Caco-2 (cell line): ENCODE measurements at regions of chr12 and their contacts with region 1.

Region 1: GRCh38 chr12:38921025-38921677 is 15.8 kb upstream of the CPNE8 start:
- DNase-seq: peak; percentile 70
- H3K4me3 ChIP-seq: no peak overlapping the region
- H3K4me3 Mint-ChIP-seq: no peak overlapping the region
- H3K27ac Mint-ChIP-seq: no peak overlapping the region
- H3K4me1 ChIP-seq: no peaks in the 10 kb centered on the region
- H3K4me1 Mint-ChIP-seq: no peaks in the 10 kb centered on the region
- H3K27me3 ChIP-seq: no peaks in the 10 kb centered on the region
- H3K27me3 Mint-ChIP-seq: peaks cover 2% of the 10 kb centered on the region
- CTCF ChIP-seq: peak; percentile 72 to 89

Region 2: GRCh38 chr12:38555620-38556596 is 365.2 kb before region 1 on chr12:
- CTCF ChIA-PET with region 1: no interaction called
- POLR2A ChIA-PET with region 1: no interaction called
- intact Hi-C with region 1: loop called (anchors 10 kb)
- DNase-seq: no peak
- H3K4me3 ChIP-seq: no peak overlapping the region
- H3K4me3 Mint-ChIP-seq: no peak overlapping the region
- H3K27ac Mint-ChIP-seq: no peak overlapping the region
- H3K4me1 ChIP-seq: no peaks in the 10 kb centered on the region
- H3K4me1 Mint-ChIP-seq: peaks cover 10% of the 10 kb centered on the region
- H3K27me3 ChIP-seq: no peaks in the 10 kb centered on the region
- H3K27me3 Mint-ChIP-seq: peaks cover 5% of the 10 kb centered on the region
- CTCF ChIP-seq: peak in 1 of 2 experiments; percentile 14

Region 3: GRCh38 chr12:38934686-38935085 is 13.5 kb after region 1 on chr12:
- CTCF ChIA-PET with region 1: no interaction called
- POLR2A ChIA-PET with region 1: no interaction called
- intact Hi-C with region 1: no loop called
- DNase-seq: no peak
- H3K4me3 ChIP-seq: no peak overlapping the region
- H3K4me3 Mint-ChIP-seq: no peak overlapping the region
- H3K27ac Mint-ChIP-seq: no peak overlapping the region
- H3K4me1 ChIP-seq: peaks cover 7% of the 10 kb centered on the region; the same call in 1 of the 2 replicates
- H3K4me1 Mint-ChIP-seq: peaks cover 10% of the 10 kb centered on the region
- H3K27me3 ChIP-seq: no peaks in the 10 kb centered on the region
- H3K27me3 Mint-ChIP-seq: no peaks in the 10 kb centered on the region
- CTCF ChIP-seq: no peak

Region 4: GRCh38 chr12:39020269-39020668 is 99.1 kb after region 1 on chr12:
- CTCF ChIA-PET with region 1: interaction called, 3 read pairs
- POLR2A ChIA-PET with region 1: no interaction called
- intact Hi-C with region 1: loop called (anchors 5 kb)
- DNase-seq: no peak
- H3K4me3 ChIP-seq: no peak overlapping the region
- H3K4me3 Mint-ChIP-seq: no peak overlapping the region
- H3K27ac Mint-ChIP-seq: no peak overlapping the region
- H3K4me1 ChIP-seq: no peaks in the 10 kb centered on the region
- H3K4me1 Mint-ChIP-seq: no peaks in the 10 kb centered on the region
- H3K27me3 ChIP-seq: no peaks in the 10 kb centered on the region
- H3K27me3 Mint-ChIP-seq: peaks cover under 1% of the 10 kb centered on the region
- CTCF ChIP-seq: no peak

Region 5: DNA sequence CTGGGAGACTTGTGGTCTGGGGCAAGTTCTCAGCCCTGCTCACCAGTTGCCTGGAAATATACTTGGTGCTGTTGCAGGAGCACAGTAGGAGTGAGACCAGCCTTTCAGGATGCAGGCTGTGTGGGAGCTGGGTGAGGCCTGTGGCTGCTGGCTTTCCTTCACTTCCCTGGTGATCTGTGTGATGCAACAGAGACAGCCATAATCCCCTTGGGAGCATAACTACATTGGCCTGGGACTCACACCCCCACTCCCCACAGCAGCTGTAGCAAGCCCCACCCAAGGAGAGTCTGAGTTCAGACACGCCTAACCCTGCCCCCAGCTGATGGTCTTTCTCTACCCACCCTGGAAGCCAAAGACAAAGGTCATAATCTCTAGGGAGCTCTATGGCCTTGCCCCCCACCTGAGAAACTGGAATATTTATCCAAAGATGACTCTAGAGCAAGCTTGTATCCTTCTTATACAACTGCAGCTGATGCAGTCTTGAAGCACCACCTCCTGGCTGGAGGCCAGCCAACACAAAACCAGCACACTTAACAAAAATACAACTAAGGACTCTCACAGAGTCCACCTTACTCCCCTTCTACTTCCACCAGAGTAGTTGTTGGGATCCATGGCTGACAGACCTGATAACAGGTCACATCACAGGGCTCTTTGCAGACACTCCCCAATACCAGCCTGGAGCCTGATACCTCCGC is 174.6 kb after region 1 on chr12:
- CTCF ChIA-PET with region 1: interaction called, 23 read pairs
- POLR2A ChIA-PET with region 1: interaction called, 5 read pairs
- intact Hi-C with region 1: loop called (anchors 1 kb)
- DNase-seq: peak in 1 of 2 experiments; percentile 15
- H3K4me3 ChIP-seq: no peak overlapping the region
- H3K4me3 Mint-ChIP-seq: no peak overlapping the region
- H3K27ac Mint-ChIP-seq: no peak overlapping the region
- H3K4me1 ChIP-seq: no peaks in the 10 kb centered on the region
- H3K4me1 Mint-ChIP-seq: no peaks in the 10 kb centered on the region
- H3K27me3 ChIP-seq: no peaks in the 10 kb centered on the region; the same call in 1 of the 2 replicates
- H3K27me3 Mint-ChIP-seq: peaks cover 9% of the 10 kb centered on the region
- CTCF ChIP-seq: peak in 1 of 2 experiments; percentile 21

Region 6: GRCh38 chr12:39199351-39199750 is 278.2 kb after region 1 on chr12:
- CTCF ChIA-PET with region 1: no interaction called
- POLR2A ChIA-PET with region 1: no interaction called
- intact Hi-C with region 1: no loop called
- DNase-seq: no peak
- H3K4me3 ChIP-seq: no peak overlapping the region
- H3K4me3 Mint-ChIP-seq: no peak overlapping the region
- H3K27ac Mint-ChIP-seq: no peak overlapping the region
- H3K4me1 ChIP-seq: no peaks in the 10 kb centered on the region
- H3K4me1 Mint-ChIP-seq: no peaks in the 10 kb centered on the region
- H3K27me3 ChIP-seq: no peaks in the 10 kb centered on the region
- H3K27me3 Mint-ChIP-seq: no peaks in the 10 kb centered on the region
- CTCF ChIP-seq: no peak

Region 7: GRCh38 chr12:39272871-39273770 is 352.0 kb after region 1 on chr12:
- CTCF ChIA-PET with region 1: interaction called, 34 read pairs
- POLR2A ChIA-PET with region 1: no interaction called
- intact Hi-C with region 1: loop called (anchors 1 kb)
- DNase-seq: peak in 1 of 2 experiments; percentile 69
- H3K4me3 ChIP-seq: no peak overlapping the region
- H3K4me3 Mint-ChIP-seq: no peak overlapping the region
- H3K27ac Mint-ChIP-seq: no peak overlapping the region
- H3K4me1 ChIP-seq: no peaks in the 10 kb centered on the region; the same call in 1 of the 2 replicates
- H3K4me1 Mint-ChIP-seq: peaks cover 9% of the 10 kb centered on the region
- H3K27me3 ChIP-seq: no peaks in the 10 kb centered on the region
- H3K27me3 Mint-ChIP-seq: no peaks in the 10 kb centered on the region
- CTCF ChIP-seq: peak; percentile 70 to 78